Activated CD4-positive, alpha-beta T cell treated with anti-CD3 and anti-CD28 coated beads, Interleukin-2, amount 10 ng/mL, durations not matched to agents 7 days and 5 days (primary cell): ENCODE measurements at regions of chr5 and their contacts with region 1.

Region 1: DNA sequence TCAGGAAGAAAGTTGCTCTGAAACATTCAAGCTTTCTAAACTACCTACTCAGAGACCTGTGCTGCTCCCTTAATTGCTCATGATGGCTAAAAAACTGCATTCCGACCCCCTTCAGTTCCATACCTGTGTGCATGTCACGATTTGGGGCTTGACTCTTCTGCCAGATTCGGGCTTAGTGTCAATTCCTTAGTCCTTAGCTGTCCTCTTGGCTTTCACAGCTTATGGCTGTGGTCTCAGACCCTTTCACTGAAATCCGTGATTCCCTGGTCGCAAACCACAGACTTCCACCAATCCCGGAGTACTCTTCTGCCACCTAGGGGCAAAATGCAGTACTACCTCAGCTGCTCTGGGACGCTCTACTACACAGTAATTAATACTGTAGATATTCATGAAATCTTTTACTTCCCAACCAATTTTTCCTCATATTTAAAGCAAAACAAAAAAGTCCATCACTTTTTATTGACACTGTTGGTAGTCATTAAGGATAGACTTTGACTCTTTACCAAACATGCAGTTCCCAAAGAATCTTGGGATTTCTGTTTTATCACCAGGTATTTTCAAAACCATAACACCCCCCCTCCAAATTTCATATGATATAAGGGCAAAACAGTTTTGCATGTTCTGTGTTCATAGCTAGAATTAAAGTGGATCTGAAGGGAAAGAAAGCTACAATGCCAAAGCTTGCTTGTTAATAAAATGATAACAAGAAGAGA is 617.4 kb downstream of the SLCO4C1 start:
- DNase-seq: peak; percentile 21
- H3K4me3 Mint-ChIP-seq: no peak overlapping the region
- H3K27ac Mint-ChIP-seq: no peak overlapping the region
- H3K4me1 Mint-ChIP-seq: no peaks in the 10 kb centered on the region
- H3K27me3 Mint-ChIP-seq: peaks cover 3% of the 10 kb centered on the region

Region 2: DNA sequence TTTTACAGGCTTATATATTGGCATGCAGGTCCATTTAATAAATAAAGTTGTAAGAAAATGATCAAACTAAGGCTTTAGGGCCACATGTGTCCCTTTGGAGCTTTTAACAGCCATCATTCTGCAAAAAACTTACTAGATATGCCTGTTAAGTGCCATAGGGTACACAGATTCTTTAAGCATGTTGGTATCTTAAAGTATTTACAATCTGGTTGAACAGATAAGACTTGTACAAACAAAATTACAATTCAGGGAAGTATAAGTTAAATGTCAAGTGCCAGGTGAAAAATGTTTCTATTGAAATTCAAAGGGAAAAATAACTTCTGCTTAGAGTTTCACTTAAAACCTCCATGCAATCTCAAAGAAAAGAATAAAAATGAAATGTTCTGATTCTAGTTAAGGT is 217.2 kb before region 1 on chr5:
- CTCF ChIA-PET with region 1: no interaction called
- POLR2A ChIA-PET with region 1: interaction called, 14 read pairs
- DNase-seq: no peak
- H3K4me3 Mint-ChIP-seq: no peak overlapping the region
- H3K27ac Mint-ChIP-seq: no peak overlapping the region
- H3K4me1 Mint-ChIP-seq: no peaks in the 10 kb centered on the region
- H3K27me3 Mint-ChIP-seq: no peaks in the 10 kb centered on the region

Region 3: GRCh38 chr5:101878190-101878589 is 199.6 kb after region 1 on chr5:
- CTCF ChIA-PET with region 1: no interaction called
- POLR2A ChIA-PET with region 1: no interaction called
- DNase-seq: no peak
- H3K4me3 Mint-ChIP-seq: no peak overlapping the region
- H3K27ac Mint-ChIP-seq: no peak overlapping the region
- H3K4me1 Mint-ChIP-seq: no peaks in the 10 kb centered on the region
- H3K27me3 Mint-ChIP-seq: no peaks in the 10 kb centered on the region